ENCODE measurements at regions of chr12 and their contacts with region 1.

Region 1: DNA sequence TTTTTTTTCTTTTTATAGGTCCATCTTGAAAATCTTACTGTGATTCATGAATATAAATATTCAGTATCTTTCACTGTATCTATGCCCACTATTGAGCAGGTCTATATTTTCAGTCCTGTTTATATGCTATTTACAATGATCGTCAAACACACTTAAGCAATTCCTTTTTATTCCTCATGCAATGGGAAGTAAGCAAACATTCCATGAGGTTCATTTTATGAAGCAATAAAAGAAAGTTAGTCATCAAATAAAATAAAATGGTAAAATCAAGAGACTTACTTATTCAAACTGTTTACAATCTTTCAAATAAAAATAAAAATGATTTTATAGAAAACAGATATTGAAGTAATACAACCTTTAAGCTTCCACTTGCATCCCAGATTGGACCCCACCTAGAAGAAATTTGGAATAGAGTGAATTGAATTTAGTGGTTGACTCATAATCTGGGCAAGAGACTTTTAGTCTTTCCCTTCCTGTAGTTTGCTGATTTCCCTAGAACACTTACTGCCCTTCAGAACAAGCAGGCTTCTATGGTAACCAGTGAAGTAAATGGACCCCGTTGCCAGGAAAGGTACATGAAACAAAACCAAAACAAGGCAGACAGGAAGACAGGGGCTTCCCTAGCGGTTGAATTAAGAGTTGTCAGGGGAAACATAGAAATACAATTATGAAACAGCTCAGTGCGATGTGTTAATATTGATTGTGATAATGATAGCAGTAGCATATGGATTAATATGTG is 241.0 kb upstream of the ATP2B1 start:
- DNase-seq: no peak
- ATAC-seq: peak; percentile 70
- H3K4me3 Mint-ChIP-seq: peak overlapping the region; percentile 64
- H3K27ac Mint-ChIP-seq: peak overlapping the region; percentile 90
- H3K4me1 Mint-ChIP-seq: peaks cover 62% of the 10 kb centered on the region
- H3K27me3 Mint-ChIP-seq: no peaks in the 10 kb centered on the region
- CTCF ChIP-seq: no peak

Region 2: GRCh38 chr12:89352492-89353187 is 597.0 kb before region 1 on chr12 and contains the start of gene DUSP6:
- CTCF ChIA-PET with region 1: no interaction called
- POLR2A ChIA-PET with region 1: no interaction called
- intact Hi-C with region 1: loop called (anchors 5 kb)
- DNase-seq: peak; percentile 62
- ATAC-seq: peak; percentile 61
- H3K4me3 Mint-ChIP-seq: peak within 1 kb of the TSS; percentile 84
- H3K27ac Mint-ChIP-seq: peak within 1 kb of the TSS; percentile 82
- H3K4me1 Mint-ChIP-seq: peaks cover 62% of the 10 kb centered on the region
- H3K27me3 Mint-ChIP-seq: no peaks in the 10 kb centered on the region
- CTCF ChIP-seq: no peak
- total RNA-seq, gene DUSP6: 1.6 and 1.8 TPM in 2 replicates

Region 3: DNA sequence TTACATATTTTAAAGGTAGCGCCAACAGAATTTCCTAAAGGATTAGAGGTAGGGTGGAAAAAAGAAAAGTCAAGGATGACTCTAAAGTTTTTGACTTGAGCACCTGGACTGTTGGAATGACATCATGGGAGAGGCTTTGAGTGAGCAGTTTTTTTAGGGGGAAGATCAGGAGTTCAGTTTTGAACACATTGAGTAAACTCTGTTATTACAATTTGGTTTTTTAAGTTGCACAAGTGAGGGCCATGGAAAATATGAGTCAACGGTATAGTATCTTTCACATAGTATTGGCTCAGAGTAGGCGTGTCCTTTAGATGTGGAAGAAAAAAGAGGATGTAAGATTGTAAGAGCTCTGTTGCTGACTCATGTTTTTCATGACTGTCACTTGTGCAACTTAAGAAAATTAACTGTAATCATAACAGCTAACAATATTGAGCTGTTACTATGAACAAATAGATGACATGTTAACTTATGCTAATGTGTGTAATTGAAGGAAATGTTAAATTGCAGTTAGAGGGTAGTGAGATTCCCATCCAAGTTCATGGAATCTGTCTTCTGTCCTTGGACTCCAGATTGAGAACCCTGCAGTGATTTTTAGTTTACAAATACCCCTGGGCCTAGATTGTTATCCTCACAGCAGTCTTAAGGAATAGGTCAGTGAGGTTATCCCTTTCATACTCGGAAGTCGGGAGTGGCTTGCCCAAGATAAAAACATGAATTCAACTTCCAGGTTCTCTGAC is 192.9 kb before region 1 on chr12:
- CTCF ChIA-PET with region 1: no interaction called
- POLR2A ChIA-PET with region 1: no interaction called
- intact Hi-C with region 1: loop called (anchors 1 kb)
- DNase-seq: no peak
- ATAC-seq: peak; percentile 74
- H3K4me3 Mint-ChIP-seq: peak overlapping the region; percentile 25
- H3K27ac Mint-ChIP-seq: peak overlapping the region; percentile 96
- H3K4me1 Mint-ChIP-seq: peaks cover 62% of the 10 kb centered on the region
- H3K27me3 Mint-ChIP-seq: no peaks in the 10 kb centered on the region
- CTCF ChIP-seq: no peak

Region 4: DNA sequence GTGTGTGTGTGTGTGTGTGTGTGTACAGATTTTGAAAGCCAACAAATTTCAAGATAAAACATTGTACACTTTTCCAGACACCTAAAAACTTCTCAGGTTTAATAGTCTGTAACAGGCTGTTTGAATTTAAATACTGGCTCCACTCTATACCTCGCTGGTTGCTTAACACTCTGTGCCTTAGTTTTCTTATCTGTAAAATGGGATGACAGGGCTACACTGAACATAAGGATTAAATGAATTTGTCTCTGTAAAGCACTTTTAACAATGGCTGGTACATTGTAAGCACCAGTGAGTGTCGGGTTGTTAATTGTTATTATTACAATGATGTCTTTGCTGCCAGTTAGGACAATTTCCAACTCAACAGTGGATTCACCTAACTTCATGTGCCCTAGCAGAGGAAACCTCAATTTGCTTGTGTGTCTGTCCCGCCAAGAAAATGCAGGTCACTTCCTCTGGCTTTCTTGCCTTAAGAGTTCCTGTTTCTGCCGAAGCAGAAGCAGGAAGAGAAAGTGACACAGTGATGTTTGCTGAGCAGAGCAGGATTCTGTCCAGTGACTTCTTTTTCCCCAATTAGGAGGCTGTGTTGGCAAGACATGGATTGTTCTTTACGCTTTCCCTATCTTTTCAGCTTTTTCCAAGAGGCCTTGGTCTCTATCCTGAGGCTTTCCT is 87.0 kb before region 1 on chr12:
- CTCF ChIA-PET with region 1: interaction called, 5 read pairs
- POLR2A ChIA-PET with region 1: interaction called, 6 read pairs
- intact Hi-C with region 1: loop called (anchors 1 kb)
- DNase-seq: peak; percentile 30
- ATAC-seq: peak; percentile 76
- H3K4me3 Mint-ChIP-seq: peak overlapping the region; percentile 81
- H3K27ac Mint-ChIP-seq: peak overlapping the region; percentile 96
- H3K4me1 Mint-ChIP-seq: peaks cover 73% of the 10 kb centered on the region
- H3K27me3 Mint-ChIP-seq: no peaks in the 10 kb centered on the region
- CTCF ChIP-seq: no peak

Region 5: GRCh38 chr12:89927226-89927698 is 22.4 kb before region 1 on chr12:
- CTCF ChIA-PET with region 1: interaction called, 15 read pairs
- POLR2A ChIA-PET with region 1: interaction called, 39 read pairs
- intact Hi-C with region 1: loop called (anchors 1 kb)
- DNase-seq: no peak
- ATAC-seq: peak; percentile 90
- H3K4me3 Mint-ChIP-seq: peak overlapping the region; percentile 89
- H3K27ac Mint-ChIP-seq: peak overlapping the region; percentile 98
- H3K4me1 Mint-ChIP-seq: peaks cover 69% of the 10 kb centered on the region
- H3K27me3 Mint-ChIP-seq: no peaks in the 10 kb centered on the region
- CTCF ChIP-seq: no peak

Region 6: DNA sequence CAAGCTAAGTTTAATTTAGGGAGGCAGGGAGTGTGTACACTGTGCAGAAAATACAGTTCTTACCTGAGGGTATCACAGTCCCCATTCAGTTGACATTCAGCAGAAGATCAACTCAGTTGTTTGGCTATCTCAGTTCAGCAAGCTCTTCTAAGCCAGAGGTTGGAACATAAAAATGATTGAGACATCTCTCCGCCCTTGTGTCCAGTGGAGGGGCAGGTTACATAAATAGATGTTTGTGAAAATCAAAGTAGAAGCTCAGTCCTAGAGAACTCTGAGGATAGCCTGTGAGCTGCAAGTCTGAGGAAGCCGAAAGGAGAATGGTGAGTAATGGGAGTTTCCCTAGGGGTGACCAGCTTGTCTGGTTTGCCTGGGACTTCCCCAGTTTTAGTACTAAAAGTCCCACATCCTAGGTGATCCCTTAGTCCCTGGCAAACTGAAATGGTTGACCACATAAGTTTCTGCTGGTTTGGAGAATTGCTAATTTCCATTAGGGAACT is 10.4 kb after region 1 on chr12:
- CTCF ChIA-PET with region 1: interaction called, 7 read pairs
- POLR2A ChIA-PET with region 1: interaction called, 18 read pairs
- intact Hi-C with region 1: loop called (anchors 1 kb)
- DNase-seq: no peak
- ATAC-seq: peak; percentile 92
- H3K4me3 Mint-ChIP-seq: peak overlapping the region; percentile 74
- H3K27ac Mint-ChIP-seq: peak overlapping the region; percentile 85
- H3K4me1 Mint-ChIP-seq: peaks cover 38% of the 10 kb centered on the region
- H3K27me3 Mint-ChIP-seq: no peaks in the 10 kb centered on the region
- CTCF ChIP-seq: no peak

Region 7: GRCh38 chr12:90102957-90103652 is 153.5 kb after region 1 on chr12:
- CTCF ChIA-PET with region 1: no interaction called
- POLR2A ChIA-PET with region 1: no interaction called
- intact Hi-C with region 1: loop called (anchors 2 kb)
- DNase-seq: no peak
- ATAC-seq: peak; percentile 75
- H3K4me3 Mint-ChIP-seq: peak overlapping the region; percentile 66
- H3K27ac Mint-ChIP-seq: peak overlapping the region; percentile 43
- H3K4me1 Mint-ChIP-seq: peaks cover 29% of the 10 kb centered on the region
- H3K27me3 Mint-ChIP-seq: no peaks in the 10 kb centered on the region
- CTCF ChIP-seq: no peak